SK-N-SH (cell line): ENCODE measurements at regions of chr12 and their contacts with region 1.

Region 1: DNA sequence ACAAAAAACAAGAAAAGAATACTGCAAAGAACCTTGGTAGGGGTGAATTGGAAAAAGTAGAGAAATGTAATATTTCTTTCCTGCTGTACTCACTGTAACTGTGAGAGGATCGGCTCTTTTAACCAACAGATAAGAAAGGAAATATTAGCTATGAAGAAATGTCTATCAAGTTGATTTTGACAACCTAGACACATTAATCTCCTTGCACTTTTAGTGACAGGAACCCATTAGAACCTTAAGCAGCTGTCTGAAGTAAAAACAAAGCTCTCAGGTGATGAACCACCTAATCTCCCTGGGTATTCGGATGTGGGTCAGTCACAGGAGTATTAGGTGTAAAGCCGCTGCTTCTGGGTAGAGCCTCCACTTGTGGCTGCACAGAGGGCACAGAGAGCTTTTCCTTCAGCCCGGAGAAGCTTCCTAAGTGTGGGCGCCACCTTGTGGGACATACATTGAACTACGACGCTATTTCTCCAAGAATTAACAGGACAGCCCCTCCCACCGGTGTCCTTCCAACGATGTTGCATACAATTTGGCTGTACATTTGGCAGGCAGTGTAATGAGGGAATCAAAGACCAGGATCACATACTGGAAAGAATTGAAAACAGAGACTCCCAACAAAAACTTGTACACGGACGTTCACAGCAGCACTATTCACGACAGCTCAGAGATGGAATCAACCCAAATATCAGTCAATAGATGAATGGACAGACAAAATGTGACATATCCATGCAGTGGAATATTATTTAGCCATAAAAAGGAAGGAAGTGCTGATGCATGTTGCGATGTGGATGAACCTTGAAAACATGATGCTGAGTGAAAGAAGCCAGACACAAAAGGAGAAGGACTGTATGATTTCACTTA is 28.9 kb upstream of the MAPKAPK5 start:
- DNase-seq: peak; percentile 85
- H3K4me3 ChIP-seq: no peak overlapping the region
- H3K27ac ChIP-seq: no peak overlapping the region
- H3K4me1 ChIP-seq: no peaks in the 10 kb centered on the region
- H3K27me3 ChIP-seq: no peaks in the 10 kb centered on the region
- CTCF ChIP-seq: peak; percentile 78
- EP300 ChIP-seq: no peak
- RAD21 ChIP-seq: peak; percentile 84

Region 2: DNA sequence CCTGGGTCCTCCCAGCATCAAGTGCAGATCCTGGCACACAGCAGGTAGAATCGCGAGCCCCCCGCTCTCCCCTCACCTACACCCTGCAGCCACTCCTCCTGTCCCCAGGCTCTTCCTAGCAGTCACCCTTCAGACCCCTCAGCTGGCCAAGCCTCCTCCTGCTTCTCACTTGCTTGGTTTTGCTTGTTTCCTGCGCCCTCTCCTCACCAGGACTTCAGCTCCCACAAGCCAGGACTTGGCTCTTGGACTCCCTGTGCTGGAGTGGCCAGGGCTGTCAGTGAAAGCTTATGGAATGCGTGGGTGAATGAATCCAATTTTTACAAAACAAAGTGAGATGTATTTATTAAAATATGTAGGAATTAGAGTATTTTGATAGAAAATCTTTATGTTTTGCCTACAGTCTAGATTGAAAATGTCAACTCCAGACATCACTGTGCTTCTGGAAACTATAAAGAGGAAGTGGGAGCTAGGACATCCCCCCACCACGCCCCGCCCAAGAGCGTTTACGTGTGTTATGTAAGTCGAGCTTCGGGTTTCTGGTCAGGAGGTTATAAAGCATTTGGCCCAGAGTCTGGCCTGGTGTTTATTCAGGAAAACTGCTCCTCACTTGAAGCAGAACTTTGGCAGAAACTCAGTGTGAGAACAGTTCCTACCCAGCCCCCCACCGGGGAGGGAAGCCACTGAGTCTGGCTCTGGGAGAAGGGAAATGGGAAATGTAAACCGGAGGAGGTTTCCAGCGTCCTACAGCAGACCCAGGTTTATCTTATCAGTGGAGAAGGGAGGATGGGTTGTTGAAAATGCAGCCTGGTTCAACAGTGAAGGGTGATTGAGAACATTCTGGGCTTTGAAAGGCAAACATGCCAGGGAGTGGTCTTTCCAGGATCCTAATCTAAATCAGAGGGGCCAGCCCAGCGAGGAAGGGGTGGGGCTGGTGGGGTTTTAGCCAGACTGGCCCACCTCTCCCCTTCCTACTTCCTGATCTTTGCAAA is 37.6 kb before region 1 on chr12:
- CTCF ChIA-PET with region 1: interaction called, 11 read pairs
- POLR2A ChIA-PET with region 1: no interaction called
- DNase-seq: peak; percentile 66
- H3K4me3 ChIP-seq: no peak overlapping the region
- H3K27ac ChIP-seq: peak overlapping the region; percentile 36 to 70; a peak in 3 of 4 replicates
- H3K4me1 ChIP-seq: peaks cover 6 to 19% of the 10 kb centered on the region in 2 experiments; a peak in 2 of 4 replicates
- H3K27me3 ChIP-seq: no peaks in the 10 kb centered on the region
- CTCF ChIP-seq: no peak
- EP300 ChIP-seq: 0 out of 4 replicates have a peak, but pooled peaks of 1 of the 2 experiments have one; percentile 9
- RAD21 ChIP-seq: no peak

Region 3: DNA sequence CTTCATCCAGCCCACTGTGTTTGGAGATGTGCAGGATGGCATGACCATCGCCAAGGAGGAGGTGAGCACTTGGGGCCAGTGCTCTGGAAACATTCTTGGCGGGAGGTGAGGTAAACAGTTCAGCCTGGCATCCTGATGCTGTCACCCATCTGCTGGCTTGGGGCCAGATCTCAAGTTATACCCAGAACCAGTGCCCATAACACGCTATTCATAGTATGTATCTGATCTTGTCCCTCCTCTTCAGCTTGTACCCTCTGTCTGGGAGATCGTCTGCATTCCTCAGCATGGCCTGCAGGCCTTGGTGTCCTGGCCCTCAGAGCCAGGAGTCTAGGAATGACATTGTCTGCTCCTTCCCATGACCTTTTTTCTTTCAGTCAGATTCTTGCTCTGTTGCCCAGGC is 14.9 kb before region 1 on chr12:
- CTCF ChIA-PET with region 1: interaction called, 21 read pairs
- POLR2A ChIA-PET with region 1: no interaction called
- DNase-seq: no peak
- H3K4me3 ChIP-seq: no peak overlapping the region
- H3K27ac ChIP-seq: no peak overlapping the region
- H3K4me1 ChIP-seq: no peaks in the 10 kb centered on the region
- H3K27me3 ChIP-seq: no peaks in the 10 kb centered on the region
- CTCF ChIP-seq: no peak
- EP300 ChIP-seq: no peak
- RAD21 ChIP-seq: no peak

Region 4: GRCh38 chr12:111826316-111826715 is 13.2 kb after region 1 on chr12:
- CTCF ChIA-PET with region 1: interaction called, 17 read pairs
- POLR2A ChIA-PET with region 1: no interaction called
- DNase-seq: no peak
- H3K4me3 ChIP-seq: no peak overlapping the region
- H3K27ac ChIP-seq: no peak overlapping the region
- H3K4me1 ChIP-seq: no peaks in the 10 kb centered on the region
- H3K27me3 ChIP-seq: no peaks in the 10 kb centered on the region
- CTCF ChIP-seq: no peak
- EP300 ChIP-seq: no peak
- RAD21 ChIP-seq: no peak

Region 5: GRCh38 chr12:112234303-112234702 is 421.2 kb after region 1 on chr12:
- CTCF ChIA-PET with region 1: no interaction called
- POLR2A ChIA-PET with region 1: no interaction called
- DNase-seq: no peak
- H3K4me3 ChIP-seq: no peak overlapping the region
- H3K27ac ChIP-seq: no peak overlapping the region
- H3K4me1 ChIP-seq: no peaks in the 10 kb centered on the region
- H3K27me3 ChIP-seq: no peaks in the 10 kb centered on the region
- CTCF ChIP-seq: no peak
- EP300 ChIP-seq: no peak
- RAD21 ChIP-seq: no peak